ENCODE measurements at regions of chr1 and their contacts with region 1.

Region 1: GRCh38 chr1:51729156-51729823 is 112.4 kb downstream of the OSBPL9 start:
- DNase-seq: peak; percentile 94
- H3K4me3 Mint-ChIP-seq: peak overlapping the region; percentile 84
- H3K27ac Mint-ChIP-seq: peak overlapping the region; percentile 88
- H3K4me1 Mint-ChIP-seq: peaks cover 24% of the 10 kb centered on the region
- H3K27me3 Mint-ChIP-seq: no peaks in the 10 kb centered on the region

Region 2: GRCh38 chr1:50968158-50968820 is 761.0 kb before region 1 on chr1:
- intact Hi-C with region 1: loop called (anchors 10 kb)
- DNase-seq: peak; percentile 82
- H3K4me3 Mint-ChIP-seq: peak overlapping the region; percentile 99
- H3K27ac Mint-ChIP-seq: peak overlapping the region; percentile 98
- H3K4me1 Mint-ChIP-seq: peaks cover 39% of the 10 kb centered on the region
- H3K27me3 Mint-ChIP-seq: peaks cover 10% of the 10 kb centered on the region

Region 3: DNA sequence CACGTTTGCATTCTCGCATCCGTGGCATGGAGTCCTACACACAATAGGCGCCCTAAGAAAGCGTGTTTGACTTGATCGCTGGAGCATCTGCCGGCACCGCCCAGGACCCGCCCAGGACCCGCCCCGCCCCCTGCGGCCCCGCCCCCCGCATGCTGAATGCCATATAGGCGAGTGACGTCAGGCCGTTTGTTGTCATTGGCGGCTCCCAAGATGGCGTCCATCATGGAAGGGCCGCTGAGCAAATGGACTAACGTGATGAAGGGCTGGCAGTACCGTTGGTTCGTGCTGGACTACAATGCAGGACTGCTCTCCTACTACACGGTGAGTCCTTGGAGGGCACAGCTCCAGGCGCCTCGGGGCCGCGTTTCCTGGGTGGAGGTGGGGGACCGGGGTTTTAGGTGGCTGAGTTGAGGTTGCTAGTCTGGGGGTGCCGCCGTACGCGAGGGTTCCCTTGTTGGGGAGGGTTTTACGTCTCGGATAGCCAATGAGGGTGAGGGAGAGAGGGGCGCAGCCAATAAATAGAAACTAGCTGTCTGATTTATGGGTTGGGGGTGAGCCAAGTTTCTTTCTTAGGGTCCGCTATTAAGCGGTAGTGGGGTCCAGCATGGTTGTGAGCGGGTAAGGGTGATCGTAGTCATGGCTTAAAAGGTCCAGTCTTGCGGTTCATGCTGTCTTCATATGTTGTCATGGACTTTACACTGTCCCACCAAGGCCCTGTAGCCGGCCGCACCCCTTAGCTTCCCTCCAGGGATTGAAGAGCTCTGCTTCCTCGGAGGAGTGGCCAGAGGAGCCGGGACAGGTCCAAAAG is 112.2 kb before region 1 on chr1 and contains the start of gene OSBPL9:
- intact Hi-C with region 1: loop called (anchors 1 kb)
- DNase-seq: peak; percentile 79
- H3K4me3 Mint-ChIP-seq: peak within 1 kb of the TSS; percentile 100
- H3K27ac Mint-ChIP-seq: peak within 1 kb of the TSS; percentile 98
- H3K4me1 Mint-ChIP-seq: peaks cover 22% of the 10 kb centered on the region
- H3K27me3 Mint-ChIP-seq: peaks cover 5% of the 10 kb centered on the region
- total RNA-seq, gene OSBPL9: 48.1 and 48.8 TPM in 2 replicates

Region 4: DNA sequence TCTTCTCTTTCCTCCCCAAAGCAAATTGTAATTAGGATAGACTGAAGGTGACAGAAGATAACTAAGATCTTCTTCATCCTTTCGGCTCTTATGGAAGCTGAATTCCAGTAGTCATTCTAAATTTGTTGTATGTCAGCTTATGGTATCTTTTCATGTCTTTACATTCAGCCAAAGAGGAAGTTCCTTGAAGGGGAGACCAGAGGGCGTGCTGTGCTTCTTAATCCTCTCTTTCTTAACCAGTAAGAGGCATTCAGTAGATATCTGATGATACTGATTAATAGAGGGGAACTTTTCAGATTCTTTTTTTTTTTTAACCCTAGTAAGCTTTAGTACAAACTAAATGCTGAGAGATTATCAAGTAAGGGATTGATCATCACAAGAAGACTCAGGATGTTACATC is 10.1 kb before region 1 on chr1:
- intact Hi-C with region 1: no loop called
- DNase-seq: no peak
- H3K4me3 Mint-ChIP-seq: no peak overlapping the region
- H3K27ac Mint-ChIP-seq: no peak overlapping the region
- H3K4me1 Mint-ChIP-seq: peaks cover 8% of the 10 kb centered on the region
- H3K27me3 Mint-ChIP-seq: no peaks in the 10 kb centered on the region

Region 5: DNA sequence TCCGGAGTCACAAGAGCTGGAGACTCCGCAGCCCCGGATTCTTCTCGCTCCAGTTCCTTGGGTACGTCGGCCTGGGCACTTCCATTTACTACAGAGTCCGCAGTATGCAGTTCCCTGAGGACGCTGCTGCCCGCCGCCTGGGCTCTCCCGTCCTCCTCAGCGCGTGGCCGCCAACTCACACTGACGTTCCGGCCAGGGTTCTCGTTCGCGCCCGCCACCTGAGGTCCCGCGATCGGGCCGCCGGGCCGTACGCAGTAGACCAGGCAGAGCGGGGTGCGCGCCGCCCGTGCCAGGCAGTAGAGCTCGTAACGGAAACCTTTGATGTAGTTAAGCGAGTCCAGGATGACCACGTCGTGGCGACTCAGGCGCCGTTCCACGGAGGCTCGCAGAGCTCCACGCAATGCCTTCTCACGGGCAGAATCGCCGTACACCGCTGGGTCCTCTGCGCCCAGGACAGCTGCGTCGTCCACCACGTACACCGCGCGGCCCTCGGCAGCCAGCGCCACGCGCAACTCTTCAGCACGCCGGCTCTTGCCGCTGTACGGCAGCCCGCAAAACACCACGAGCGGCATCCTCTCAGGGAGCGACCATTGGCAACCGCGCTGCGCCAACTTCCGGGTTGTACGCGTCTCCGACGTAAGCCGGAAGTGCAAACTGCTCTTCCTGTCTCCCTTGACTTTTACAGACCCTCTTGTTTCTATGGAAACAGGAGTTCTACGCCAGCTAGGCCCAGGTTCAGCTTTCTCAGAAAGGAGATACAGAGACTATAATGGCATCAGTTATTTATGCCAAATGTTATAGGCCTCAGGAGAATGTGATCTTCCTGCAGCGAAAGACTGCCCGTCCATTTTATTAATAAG is 304.1 kb after region 1 on chr1 and contains the start of gene KTI12:
- intact Hi-C with region 1: no loop called
- DNase-seq: peak; percentile 84
- H3K4me3 Mint-ChIP-seq: peak within 1 kb of the TSS; percentile 93
- H3K27ac Mint-ChIP-seq: peak within 1 kb of the TSS; percentile 89
- H3K4me1 Mint-ChIP-seq: peaks cover 39% of the 10 kb centered on the region
- H3K27me3 Mint-ChIP-seq: no peaks in the 10 kb centered on the region
- total RNA-seq, gene KTI12: 21.6 and 22.4 TPM in 2 replicates